ENCODE measurements at regions of chr6 and their contacts with region 1.

Region 1: GRCh38 chr6:35810971-35811497 is 5.9 kb downstream of the LHFPL5 start:
- DNase-seq: no peak
- H3K4me3 ChIP-seq: no peak overlapping the region
- H3K27ac ChIP-seq: peak overlapping the region in 1 of 2 donors; percentile 32
- H3K4me1 ChIP-seq: no peaks in the 10 kb centered on the region
- H3K27me3 ChIP-seq: peaks cover 0 to 6% of the 10 kb centered on the region in 2 donors
- CTCF ChIP-seq: no peak
- POLR2A ChIP-seq: no peak

Region 2: GRCh38 chr6:35139908-35140655 is 671.0 kb before region 1 on chr6:
- intact Hi-C with region 1: no loop called
- DNase-seq: no peak
- H3K4me3 ChIP-seq: no peak overlapping the region
- H3K27ac ChIP-seq: no peak overlapping the region
- H3K4me1 ChIP-seq: no peaks in the 10 kb centered on the region
- H3K27me3 ChIP-seq: no peaks in the 10 kb centered on the region
- CTCF ChIP-seq: peak; percentile 71 to 89 (median 86)
- POLR2A ChIP-seq: no peak

Region 3: GRCh38 chr6:35485402-35485877 is 325.6 kb before region 1 on chr6:
- intact Hi-C with region 1: no loop called
- DNase-seq: peak in 1 of 2 donors; percentile 65
- H3K4me3 ChIP-seq: peak overlapping the region; percentile 7 to 63 (median 39)
- H3K27ac ChIP-seq: peak overlapping the region; percentile 97 to 98
- H3K4me1 ChIP-seq: peaks cover 16 to 22% of the 10 kb centered on the region in 2 donors
- H3K27me3 ChIP-seq: no peaks in the 10 kb centered on the region
- CTCF ChIP-seq: no peak
- POLR2A ChIP-seq: peak; percentile 33

Region 4: GRCh38 chr6:35754448-35755277 is 56.4 kb before region 1 on chr6:
- intact Hi-C with region 1: loop called (anchors 2 kb)
- DNase-seq: peak in 1 of 2 donors; percentile 53
- H3K4me3 ChIP-seq: no peak overlapping the region
- H3K27ac ChIP-seq: no peak overlapping the region
- H3K4me1 ChIP-seq: no peaks in the 10 kb centered on the region
- H3K27me3 ChIP-seq: peaks cover 0 to 4% of the 10 kb centered on the region in 2 donors
- CTCF ChIP-seq: no peak
- POLR2A ChIP-seq: no peak